Left cardiac atrium (tissue), 4 donors: ENCODE measurements at regions of chr11 and their contacts with region 1.

Region 1: DNA sequence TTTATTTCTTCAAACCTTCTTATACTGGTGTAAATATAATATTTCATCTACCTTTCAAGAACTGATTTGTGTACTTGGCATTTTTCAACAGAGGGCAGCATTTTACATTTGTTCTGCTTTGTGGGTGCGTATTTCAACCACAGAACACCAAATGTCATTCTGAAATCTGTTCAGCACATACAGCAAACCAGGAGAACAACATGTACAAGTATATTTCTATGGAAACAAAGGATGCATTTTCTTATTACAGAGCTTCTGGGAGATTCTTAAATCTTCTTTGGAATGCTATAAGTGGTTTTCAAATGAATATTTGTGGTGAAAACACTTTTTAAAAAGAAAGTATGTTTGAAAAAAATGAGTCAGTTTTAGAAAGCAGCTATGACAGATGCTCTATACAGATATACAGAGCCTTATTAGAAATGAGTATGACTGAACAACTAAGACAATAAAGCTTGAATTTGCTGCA is 946.0 kb downstream of the FAM181B start:
- DNase-seq: no peak
- ATAC-seq: no peak

Region 2: GRCh38 chr11:81804858-81805257 is 17.2 kb after region 1 on chr11:
- intact Hi-C with region 1: loop called in 1 of 2 experiments (anchors 2 kb)
- DNase-seq: no peak
- ATAC-seq: no peak